ENCODE measurements at regions of chr22 and their contacts with region 1.

Region 1: DNA sequence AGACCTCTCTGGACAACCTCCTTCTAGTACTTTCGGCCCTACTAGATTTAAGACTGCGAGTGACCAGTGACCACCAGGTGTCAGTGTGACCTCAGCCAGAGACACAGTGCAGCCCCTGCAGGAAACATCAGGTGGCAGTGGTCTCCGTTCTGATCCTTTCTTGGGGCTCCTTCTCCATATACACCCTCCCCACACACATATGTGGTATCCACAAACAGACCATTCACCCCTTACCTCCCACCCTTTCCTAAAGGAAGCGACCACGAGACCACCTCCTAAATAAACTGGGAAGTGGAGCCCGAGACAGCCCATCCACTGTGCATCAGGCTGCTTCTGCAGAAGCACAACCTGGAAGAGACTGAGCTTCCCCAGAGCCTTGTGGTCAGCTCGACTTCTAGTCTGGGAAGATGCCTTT is 38.5 kb upstream of the CYP2D6 start:
- DNase-seq: peak; percentile 67
- H3K4me3 Mint-ChIP-seq: no peak overlapping the region
- H3K27ac Mint-ChIP-seq: no peak overlapping the region
- H3K4me1 Mint-ChIP-seq: peaks cover 6% of the 10 kb centered on the region
- H3K27me3 Mint-ChIP-seq: no peaks in the 10 kb centered on the region
- CTCF ChIP-seq: peak; percentile 97

Region 2: DNA sequence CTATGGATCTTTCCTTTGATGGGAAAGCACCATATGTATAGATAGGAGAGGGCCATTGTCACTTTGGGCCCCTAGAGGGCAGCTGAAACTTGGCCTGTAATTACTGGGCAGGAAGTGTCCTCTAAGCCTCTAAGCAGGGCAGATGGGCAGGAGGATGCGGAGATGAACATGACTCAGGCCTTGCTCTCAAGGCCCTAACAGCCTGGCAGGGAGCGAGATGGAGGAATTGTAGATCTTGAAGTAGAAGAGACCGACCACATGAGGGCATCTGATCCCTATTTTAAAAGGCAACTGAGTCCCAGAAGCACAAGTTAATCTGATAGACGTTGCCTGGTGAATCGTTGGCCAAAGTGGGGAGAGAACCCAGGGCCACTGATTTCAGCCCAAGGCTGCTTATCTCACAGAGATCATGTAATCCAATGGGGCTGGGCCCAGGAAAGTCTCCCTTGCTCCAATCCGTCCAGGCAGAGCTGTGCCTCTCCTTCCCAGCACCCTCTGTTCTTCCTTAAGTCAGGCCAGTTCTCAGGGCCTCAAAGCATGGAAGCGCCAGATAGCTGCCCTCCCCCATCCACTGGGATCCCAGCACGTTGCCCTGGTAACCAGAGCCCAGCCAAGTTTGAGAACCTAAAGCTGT is 202.3 kb before region 1 on chr22:
- CTCF ChIA-PET with region 1: interaction called, 5 read pairs
- POLR2A ChIA-PET with region 1: no interaction called
- intact Hi-C with region 1: loop called (anchors 1 kb)
- DNase-seq: peak; percentile 76
- H3K4me3 Mint-ChIP-seq: no peak overlapping the region
- H3K27ac Mint-ChIP-seq: no peak overlapping the region
- H3K4me1 Mint-ChIP-seq: peaks cover 6% of the 10 kb centered on the region
- H3K27me3 Mint-ChIP-seq: no peaks in the 10 kb centered on the region
- CTCF ChIP-seq: peak; percentile 29

Region 3: GRCh38 chr22:42269407-42270177 is 100.5 kb after region 1 on chr22:
- CTCF ChIA-PET with region 1: interaction called, 4 read pairs
- POLR2A ChIA-PET with region 1: interaction called, 6 read pairs
- intact Hi-C with region 1: loop called (anchors 5 kb)
- DNase-seq: peak; percentile 71
- H3K4me3 Mint-ChIP-seq: peak overlapping the region; percentile 92
- H3K27ac Mint-ChIP-seq: peak overlapping the region; percentile 79
- H3K4me1 Mint-ChIP-seq: peaks cover 21% of the 10 kb centered on the region
- H3K27me3 Mint-ChIP-seq: no peaks in the 10 kb centered on the region
- CTCF ChIP-seq: peak; percentile 6

Region 4: GRCh38 chr22:42313804-42314581 is 144.9 kb after region 1 on chr22:
- CTCF ChIA-PET with region 1: interaction called, 10 read pairs
- POLR2A ChIA-PET with region 1: no interaction called
- intact Hi-C with region 1: loop called (anchors 1 kb)
- DNase-seq: peak; percentile 97
- H3K4me3 Mint-ChIP-seq: peak overlapping the region; percentile 43
- H3K27ac Mint-ChIP-seq: peak overlapping the region; percentile 55
- H3K4me1 Mint-ChIP-seq: peaks cover 44% of the 10 kb centered on the region
- H3K27me3 Mint-ChIP-seq: no peaks in the 10 kb centered on the region
- CTCF ChIP-seq: peak; percentile 40

Region 5: GRCh38 chr22:42473484-42474193 is 304.6 kb after region 1 on chr22:
- CTCF ChIA-PET with region 1: interaction called, 11 read pairs
- POLR2A ChIA-PET with region 1: no interaction called
- intact Hi-C with region 1: no loop called
- DNase-seq: peak; percentile 74
- H3K4me3 Mint-ChIP-seq: no peak overlapping the region
- H3K27ac Mint-ChIP-seq: no peak overlapping the region
- H3K4me1 Mint-ChIP-seq: no peaks in the 10 kb centered on the region
- H3K27me3 Mint-ChIP-seq: peaks cover 39% of the 10 kb centered on the region
- CTCF ChIP-seq: peak; percentile 46